GM10248 (cell line): ENCODE measurements at regions of chr2 and their contacts with region 1.

Region 1: GRCh38 chr2:127064642-127065250 is 42.2 kb downstream of the BIN1 start:
- DNase-seq: peak; percentile 87
- CTCF ChIP-seq: no peak

Region 2: DNA sequence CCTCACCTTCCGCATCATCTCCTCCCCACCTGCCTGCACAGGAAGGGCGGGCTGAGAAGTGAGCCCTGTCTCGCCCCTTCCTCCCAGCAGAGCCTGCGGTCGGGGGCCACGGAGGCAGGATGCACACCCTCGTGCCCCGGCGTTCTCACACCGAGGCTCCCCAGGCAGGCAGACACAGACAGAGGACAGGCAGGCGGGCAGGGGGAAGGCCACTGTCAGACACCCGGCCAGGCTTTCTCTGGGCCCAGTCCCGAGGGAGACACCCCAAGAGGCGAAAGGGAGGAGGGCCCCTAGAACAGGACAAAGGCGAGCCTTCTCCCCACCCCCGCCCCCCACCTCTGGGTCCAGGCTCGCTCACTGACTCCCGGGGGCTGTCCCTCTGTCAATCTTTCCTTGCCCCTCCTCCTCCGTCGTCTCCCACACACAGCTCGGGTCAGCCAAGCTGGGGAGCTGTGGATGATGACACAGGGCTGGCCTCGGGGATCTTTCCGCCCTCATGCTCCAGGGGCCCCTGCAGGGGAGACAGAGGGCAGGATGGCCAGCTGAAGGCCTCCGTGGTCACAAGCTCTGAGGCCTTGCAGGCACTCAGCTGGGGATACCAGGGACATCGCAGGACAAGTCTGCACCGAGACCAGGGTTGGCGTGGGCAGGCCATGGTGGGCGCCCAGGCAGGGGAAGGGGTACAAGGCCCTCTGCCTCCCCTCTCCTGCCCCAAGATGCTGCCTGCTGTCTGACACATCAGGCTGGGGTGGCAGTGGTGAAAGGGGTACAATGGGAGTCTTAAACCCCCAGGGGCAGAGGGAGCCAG is 17.3 kb after region 1 on chr2:
- CTCF ChIA-PET with region 1: interaction called, 77 read pairs
- POLR2A ChIA-PET with region 1: no interaction called
- DNase-seq: peak; percentile 80
- CTCF ChIP-seq: no peak

Region 3: GRCh38 chr2:127089478-127090235 is 24.9 kb after region 1 on chr2:
- CTCF ChIA-PET with region 1: interaction called, 18 read pairs
- POLR2A ChIA-PET with region 1: no interaction called
- DNase-seq: no peak
- CTCF ChIP-seq: no peak

Region 4: GRCh38 chr2:127174136-127174535 is 109.4 kb after region 1 on chr2:
- CTCF ChIA-PET with region 1: interaction called, 14 read pairs
- POLR2A ChIA-PET with region 1: no interaction called
- DNase-seq: peak; percentile 42
- CTCF ChIP-seq: no peak